RWPE1 (cell line): ENCODE measurements at regions of chr15 and their contacts with region 1.

Region 1: DNA sequence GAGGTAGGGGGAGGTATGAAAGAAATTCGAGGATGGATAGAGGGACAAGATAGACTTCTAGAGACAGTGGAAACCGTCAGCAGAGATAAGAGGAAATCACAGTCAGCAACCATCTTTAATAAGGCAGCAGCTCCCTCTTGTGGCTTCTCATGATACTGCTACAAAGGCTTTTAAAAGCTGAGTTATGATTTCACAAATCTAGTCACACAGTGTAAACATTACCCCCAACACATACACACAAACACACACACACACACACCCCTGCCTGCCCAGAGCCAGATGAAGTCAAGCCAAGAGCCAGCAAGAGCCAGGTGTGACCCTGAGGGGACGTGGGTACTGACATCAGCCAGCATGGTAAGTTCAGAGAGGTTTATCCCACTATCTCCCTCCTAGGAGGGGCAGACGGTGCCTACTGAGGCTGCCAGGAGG is 18.9 kb upstream of the TGM5 start:
- DNase-seq: peak; percentile 82
- H3K27ac ChIP-seq: no peak overlapping the region
- CTCF ChIP-seq: peak; percentile 93

Region 2: DNA sequence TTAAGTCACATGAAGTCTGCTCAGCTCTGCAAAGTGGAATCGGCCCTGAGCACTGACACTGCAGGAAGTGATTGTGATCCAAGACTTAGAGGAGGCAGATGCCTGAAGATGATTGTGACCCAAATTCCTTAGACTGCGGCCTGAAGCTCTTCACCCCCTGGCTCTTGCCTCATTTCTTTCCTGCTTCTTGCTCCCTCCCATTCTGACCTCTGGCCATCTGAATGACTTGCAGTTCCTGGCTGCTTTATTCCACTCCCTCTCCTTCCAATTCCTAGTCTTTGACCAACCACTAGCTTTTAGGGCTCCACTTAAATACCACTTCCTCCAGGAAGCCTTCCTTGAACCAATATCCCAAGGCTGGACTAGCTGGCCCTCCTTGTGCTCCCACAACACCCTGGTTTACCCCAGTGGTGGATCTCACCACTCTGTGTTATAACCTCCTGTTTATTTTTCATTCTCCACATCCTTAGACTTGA is 54.9 kb before region 1 on chr15:
- CTCF ChIA-PET with region 1: interaction called, 95 read pairs
- POLR2A ChIA-PET with region 1: no interaction called
- DNase-seq: no peak
- H3K27ac ChIP-seq: no peak overlapping the region
- CTCF ChIP-seq: no peak

Region 3: DNA sequence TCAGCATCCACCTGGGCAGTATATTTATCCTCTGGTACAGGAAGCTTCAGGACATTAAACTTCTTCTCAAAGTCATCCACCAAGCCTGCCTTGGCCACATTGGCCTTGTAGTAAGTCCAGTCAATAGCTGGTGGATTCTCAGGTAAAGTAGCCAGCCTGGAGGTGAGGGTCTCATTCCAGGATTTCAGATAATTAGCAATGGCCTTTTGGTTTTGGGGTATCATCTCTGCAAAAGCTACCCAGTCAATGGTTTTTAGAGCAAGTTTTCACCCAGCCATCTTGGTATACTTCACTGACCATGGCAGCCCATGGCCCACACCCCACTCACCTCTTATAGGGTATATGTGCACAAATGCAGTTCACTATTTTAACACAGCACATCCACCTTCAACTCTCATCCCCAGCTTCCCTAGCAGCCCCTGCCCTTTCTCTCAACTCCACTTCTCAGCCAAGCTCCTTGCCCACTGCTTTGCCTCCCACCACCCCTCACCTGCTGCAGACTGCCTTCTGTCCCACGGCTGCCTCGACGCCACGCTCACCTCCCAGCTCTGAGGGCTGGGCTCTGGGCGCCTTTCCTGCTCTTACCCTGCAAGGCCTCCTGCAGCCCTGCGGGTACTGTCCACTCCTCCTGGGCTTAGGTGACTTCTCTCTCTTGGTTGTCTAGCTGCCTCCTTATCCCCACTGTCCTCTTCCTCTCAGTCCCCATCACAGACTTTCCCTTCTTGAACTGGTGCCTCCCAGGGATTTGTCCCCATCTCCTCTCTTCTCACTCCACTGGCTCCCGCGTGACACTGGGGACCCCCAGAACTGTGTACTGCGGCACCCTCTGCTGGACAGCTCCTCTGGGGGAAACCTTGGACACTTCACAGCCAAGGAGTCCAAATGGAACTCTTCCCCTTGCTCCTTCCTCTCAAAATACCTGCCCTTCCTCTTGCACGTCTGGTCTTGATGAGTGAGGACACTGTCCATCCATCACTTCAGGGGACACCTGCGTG is 17.2 kb before region 1 on chr15:
- CTCF ChIA-PET with region 1: interaction called, 11 read pairs
- POLR2A ChIA-PET with region 1: no interaction called
- DNase-seq: no peak
- H3K27ac ChIP-seq: no peak overlapping the region
- CTCF ChIP-seq: no peak